Activated CD4-positive, alpha-beta memory T cell treated with anti-CD3 and anti-CD28 coated beads for 36 hours (primary cell): ENCODE measurements at regions of chr7 and their contacts with region 1.

Region 1: DNA sequence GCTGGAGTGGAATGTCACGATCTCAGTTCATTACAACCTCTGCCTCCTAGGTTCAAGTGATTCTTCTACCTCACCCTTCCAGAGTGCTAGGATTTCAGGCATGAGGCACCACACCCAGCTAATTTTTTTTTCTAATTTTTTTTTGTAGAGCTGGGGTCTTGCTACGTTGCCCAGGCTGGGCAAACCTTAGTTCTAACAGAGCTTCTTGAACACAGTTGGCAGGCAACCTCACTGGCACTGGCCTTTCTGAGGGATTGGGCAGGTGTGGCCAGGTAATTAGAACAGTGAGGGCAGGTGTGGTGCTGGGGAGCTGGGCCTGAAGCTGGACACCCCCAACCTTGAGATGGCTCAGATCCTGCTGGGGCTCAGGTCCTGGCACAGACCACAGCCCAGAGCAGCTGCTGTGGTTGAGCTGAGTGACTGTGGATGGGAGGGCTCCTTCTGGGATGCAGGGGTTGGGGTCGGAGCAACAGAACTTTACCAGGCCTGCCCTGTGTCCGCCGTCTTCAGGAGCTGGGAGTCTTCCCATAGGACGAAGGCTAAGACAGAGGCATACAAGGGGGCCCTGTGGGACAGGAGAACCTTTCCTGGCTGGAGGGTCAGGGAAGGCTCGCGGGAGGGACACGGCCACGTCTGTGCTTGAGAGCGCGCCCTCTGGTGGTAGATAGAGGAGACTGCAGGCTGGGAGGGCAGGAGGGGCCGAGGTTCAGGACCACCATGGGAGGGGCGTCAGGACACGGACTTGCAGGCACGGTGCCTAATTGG is 48.2 kb downstream of the COL26A1 start:
- DNase-seq: peak; percentile 47
- H3K4me3 Mint-ChIP-seq: no peak overlapping the region
- H3K27ac Mint-ChIP-seq: no peak overlapping the region
- H3K4me1 Mint-ChIP-seq: peaks cover 6% of the 10 kb centered on the region
- H3K27me3 Mint-ChIP-seq: peaks cover 5% of the 10 kb centered on the region

Region 2: DNA sequence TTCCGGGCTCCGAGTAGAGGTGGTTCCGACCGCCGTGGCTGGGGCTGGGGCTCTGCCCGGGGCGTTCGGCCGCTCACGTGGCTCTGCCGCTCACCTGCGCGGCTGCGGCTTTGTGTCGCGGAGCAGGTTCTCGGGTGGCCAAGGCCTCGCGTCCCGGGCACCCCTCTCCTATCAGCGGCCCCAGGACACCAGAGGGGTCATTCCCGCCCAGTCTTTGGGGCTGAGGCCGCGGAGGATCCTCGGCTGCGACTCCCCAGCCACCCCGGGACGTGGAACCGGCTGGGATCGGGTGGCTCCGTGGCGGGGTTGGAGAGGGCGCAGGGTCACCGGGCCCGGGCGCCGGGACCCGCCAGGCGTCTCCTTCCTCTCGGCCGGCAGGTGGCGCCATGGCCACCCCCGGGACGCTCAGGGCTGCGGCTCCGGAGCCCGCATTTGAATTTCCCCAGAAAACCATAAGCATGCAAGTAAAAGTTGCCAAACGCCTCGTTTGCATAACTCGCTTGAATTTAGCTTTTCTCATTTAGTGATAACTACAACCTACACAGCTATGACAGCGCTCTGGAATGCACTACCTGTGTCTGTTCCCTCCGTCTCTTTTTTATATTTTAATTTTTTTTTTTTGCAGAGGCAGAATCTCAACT is 47.1 kb before region 1 on chr7:
- CTCF ChIA-PET with region 1: interaction called, 53 read pairs
- POLR2A ChIA-PET with region 1: interaction called, 3 read pairs
- intact Hi-C with region 1: loop called (anchors 2 kb)
- DNase-seq: peak; percentile 82
- H3K4me3 Mint-ChIP-seq: no peak overlapping the region
- H3K27ac Mint-ChIP-seq: no peak overlapping the region
- H3K4me1 Mint-ChIP-seq: peaks cover 8% of the 10 kb centered on the region
- H3K27me3 Mint-ChIP-seq: peaks cover 25% of the 10 kb centered on the region